ENCODE measurements at regions of chr9 and their contacts with region 1.

Region 1: GRCh38 chr9:34591248-34591916 is 1.9 kb upstream of the CNTFR start:
- DNase-seq: peak; percentile 84 to 91
- ATAC-seq: peak; percentile 84 to 95
- H3K4me3 ChIP-seq: no peak overlapping the region
- H3K27ac ChIP-seq: no peak overlapping the region
- H3K4me1 ChIP-seq: peaks cover 7% of the 10 kb centered on the region; the same call in 2 of the 3 replicates
- CTCF ChIP-seq: peak; percentile 81
- EP300 ChIP-seq: no peak
- POLR2A ChIP-seq: no peak
- RAD21 ChIP-seq: peak; percentile 89 to 94

Region 2: GRCh38 chr9:34343090-34343489 is 248.3 kb before region 1 on chr9:
- CTCF ChIA-PET with region 1: interaction called, 12 read pairs
- POLR2A ChIA-PET with region 1: no interaction called
- DNase-seq: no peak
- ATAC-seq: no peak
- H3K4me3 ChIP-seq: no peak overlapping the region
- H3K27ac ChIP-seq: no peak overlapping the region
- H3K4me1 ChIP-seq: no peaks in the 10 kb centered on the region
- CTCF ChIP-seq: no peak
- EP300 ChIP-seq: no peak
- POLR2A ChIP-seq: no peak
- RAD21 ChIP-seq: no peak

Region 3: GRCh38 chr9:34413231-34413852 is 178.0 kb before region 1 on chr9:
- CTCF ChIA-PET with region 1: interaction called, 14 read pairs
- POLR2A ChIA-PET with region 1: no interaction called
- DNase-seq: peak; percentile 27 to 49
- ATAC-seq: peak; percentile 39 to 73; a peak in 4 of 6 replicates
- H3K4me3 ChIP-seq: no peak overlapping the region
- H3K27ac ChIP-seq: no peak overlapping the region
- H3K4me1 ChIP-seq: no peaks in the 10 kb centered on the region
- CTCF ChIP-seq: no peak
- EP300 ChIP-seq: no peak
- POLR2A ChIP-seq: no peak
- RAD21 ChIP-seq: no peak

Region 4: DNA sequence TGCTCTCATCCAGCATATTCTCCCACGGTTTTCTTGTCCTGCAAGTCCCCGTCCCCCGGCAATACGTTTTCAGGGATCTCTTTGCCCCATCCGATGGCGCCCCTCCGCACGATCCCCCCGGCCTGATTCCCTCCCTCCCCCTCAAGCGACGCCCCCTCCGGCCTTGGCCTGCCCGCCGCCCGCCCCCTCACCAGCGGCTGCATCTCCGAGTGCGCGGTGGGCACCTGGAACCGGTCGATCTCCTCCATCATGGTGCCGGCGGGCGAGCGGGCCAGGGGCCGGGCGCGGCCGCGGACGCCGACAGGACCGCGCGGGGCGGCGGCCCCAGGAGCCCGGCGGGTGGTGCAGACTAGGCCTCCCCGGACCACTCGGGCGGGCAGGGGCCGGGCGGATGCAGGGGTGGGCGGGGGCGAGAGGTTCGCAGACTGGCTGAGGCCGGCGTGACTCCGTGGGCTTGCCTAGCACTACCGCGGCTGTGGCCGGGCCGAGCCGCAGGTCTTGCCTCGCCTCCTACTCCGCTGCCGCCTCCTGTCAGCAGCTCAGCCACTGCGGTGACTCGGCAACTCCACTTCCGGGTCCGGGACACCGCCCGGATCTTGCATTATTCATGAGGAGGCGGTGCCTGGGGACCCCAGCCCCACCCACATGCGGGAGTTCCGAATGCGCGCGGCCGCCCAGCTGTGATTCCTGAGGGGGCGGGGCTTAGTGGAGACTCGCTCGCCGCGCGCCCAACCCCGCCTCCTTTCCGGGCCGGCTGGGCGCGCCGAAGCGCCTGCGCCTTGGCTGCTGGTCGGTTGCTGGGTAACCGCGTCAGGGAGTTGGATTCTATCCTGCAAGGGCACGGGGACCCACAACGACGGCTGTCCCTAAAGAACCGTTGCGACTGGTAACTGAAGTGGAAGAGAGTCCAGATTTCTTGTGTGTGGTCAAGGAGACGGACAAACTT is 133.1 kb before region 1 on chr9 and contains the starts of genes DNAI1 and FAM219A:
- CTCF ChIA-PET with region 1: interaction called, 16 read pairs
- POLR2A ChIA-PET with region 1: no interaction called
- DNase-seq: peak; percentile 94 to 98
- ATAC-seq: peak; percentile 92 to 95
- H3K4me3 ChIP-seq: peak within 1 kb of the TSS; percentile 87
- H3K27ac ChIP-seq: peak within 1 kb of the TSS; percentile 84 to 94
- H3K4me1 ChIP-seq: peaks cover 17% of the 10 kb centered on the region; the same call in 2 of the 3 replicates
- CTCF ChIP-seq: no peak
- EP300 ChIP-seq: no peak
- POLR2A ChIP-seq: peak; percentile 78
- RAD21 ChIP-seq: no peak
- polyA plus RNA-seq, gene DNAI1: 0.16 and 0.27 TPM in 2 replicates
- polyA plus RNA-seq, gene FAM219A: 8.1 and 10.4 TPM in 2 replicates

Region 5: GRCh38 chr9:34522971-34523797 is 68.2 kb before region 1 on chr9 and contains the start of gene ENHO:
- CTCF ChIA-PET with region 1: interaction called, 20 read pairs
- POLR2A ChIA-PET with region 1: no interaction called
- DNase-seq: peak; percentile 83 to 94
- ATAC-seq: peak; percentile 92 to 99
- H3K4me3 ChIP-seq: peak within 1 kb of the TSS; percentile 58
- H3K27ac ChIP-seq: peak within 1 kb of the TSS; percentile 70 to 85
- H3K4me1 ChIP-seq: peaks cover 8% of the 10 kb centered on the region; the same call in 2 of the 3 replicates
- CTCF ChIP-seq: no peak
- EP300 ChIP-seq: no peak
- POLR2A ChIP-seq: peak; percentile 20; the same call in 1 of the 2 replicates
- RAD21 ChIP-seq: no peak
- polyA plus RNA-seq, gene ENHO: 0.28 and 0.32 TPM in 2 replicates

Region 6: GRCh38 chr9:34570376-34570775 is 21.0 kb before region 1 on chr9:
- CTCF ChIA-PET with region 1: interaction called, 125 read pairs
- POLR2A ChIA-PET with region 1: no interaction called
- DNase-seq: no peak
- ATAC-seq: no peak
- H3K4me3 ChIP-seq: no peak overlapping the region
- H3K27ac ChIP-seq: peak overlapping the region in 1 of 2 experiments; percentile 63; a peak in 1 of 6 replicates
- H3K4me1 ChIP-seq: peaks cover 20% of the 10 kb centered on the region
- CTCF ChIP-seq: no peak
- EP300 ChIP-seq: no peak
- POLR2A ChIP-seq: no peak
- RAD21 ChIP-seq: no peak

Region 7: GRCh38 chr9:34620061-34620994 is 28.9 kb after region 1 on chr9 and contains the start of gene DCTN3:
- CTCF ChIA-PET with region 1: interaction called, 10 read pairs
- POLR2A ChIA-PET with region 1: no interaction called
- DNase-seq: peak; percentile 93 to 97
- ATAC-seq: peak; percentile 96 to 99
- H3K4me3 ChIP-seq: peak within 1 kb of the TSS; percentile 81
- H3K27ac ChIP-seq: peak within 1 kb of the TSS; percentile 63 to 80
- H3K4me1 ChIP-seq: peaks cover 6% of the 10 kb centered on the region; the same call in 2 of the 3 replicates
- CTCF ChIP-seq: no peak
- EP300 ChIP-seq: no peak
- POLR2A ChIP-seq: peak; percentile 30; the same call in 1 of the 2 replicates
- RAD21 ChIP-seq: no peak
- polyA plus RNA-seq, gene DCTN3: 64.8 and 74.3 TPM in 2 replicates

Region 8: DNA sequence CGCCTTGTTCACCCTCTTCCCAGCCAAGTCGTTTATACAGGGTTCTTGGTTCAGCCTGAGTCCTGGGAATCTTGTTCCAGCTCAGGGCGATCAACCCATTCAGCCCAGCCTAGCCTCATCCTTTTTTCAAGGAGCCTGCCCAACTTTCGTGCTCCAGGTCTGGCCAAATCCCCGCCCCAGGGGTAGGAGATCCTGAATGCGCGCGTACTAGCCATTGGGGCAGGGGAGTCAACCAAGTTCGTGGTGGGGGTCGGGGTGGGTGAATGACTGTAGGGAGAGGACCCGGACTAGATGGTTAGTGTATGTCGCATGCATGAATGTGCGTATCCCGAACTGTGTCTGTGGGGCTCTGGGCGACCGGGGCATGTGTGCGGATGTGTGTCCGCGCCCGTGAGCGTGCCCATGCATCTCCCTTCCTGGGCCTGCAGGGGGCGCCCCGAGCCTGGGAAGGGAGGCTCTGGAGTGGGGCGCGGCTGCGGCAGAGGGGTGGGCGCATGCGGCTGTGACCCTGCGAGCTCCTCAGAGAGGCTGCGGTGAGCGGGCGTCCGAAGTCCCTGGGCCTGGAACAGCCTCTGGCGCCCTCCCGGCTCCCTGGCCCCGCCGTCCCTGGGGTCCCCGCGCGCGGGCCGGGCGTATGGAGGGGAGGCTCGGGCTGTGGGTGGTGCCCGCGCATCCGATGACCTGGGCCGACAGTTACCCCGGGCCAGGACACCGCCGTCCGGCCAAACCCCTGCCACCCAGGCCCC is 109.8 kb after region 1 on chr9:
- CTCF ChIA-PET with region 1: no interaction called
- POLR2A ChIA-PET with region 1: no interaction called
- DNase-seq: peak; percentile 77 to 83
- ATAC-seq: peak; percentile 94 to 96
- H3K4me3 ChIP-seq: peak overlapping the region; percentile 57
- H3K27ac ChIP-seq: peak overlapping the region; percentile 51 to 87
- H3K4me1 ChIP-seq: no peaks in the 10 kb centered on the region
- CTCF ChIP-seq: peak; percentile 93
- EP300 ChIP-seq: no peak
- POLR2A ChIP-seq: no peak
- RAD21 ChIP-seq: peak; percentile 65 to 73; a peak in 4 of 5 replicates